ENCODE measurements at regions of chr20 and their contacts with region 1.

Region 1: DNA sequence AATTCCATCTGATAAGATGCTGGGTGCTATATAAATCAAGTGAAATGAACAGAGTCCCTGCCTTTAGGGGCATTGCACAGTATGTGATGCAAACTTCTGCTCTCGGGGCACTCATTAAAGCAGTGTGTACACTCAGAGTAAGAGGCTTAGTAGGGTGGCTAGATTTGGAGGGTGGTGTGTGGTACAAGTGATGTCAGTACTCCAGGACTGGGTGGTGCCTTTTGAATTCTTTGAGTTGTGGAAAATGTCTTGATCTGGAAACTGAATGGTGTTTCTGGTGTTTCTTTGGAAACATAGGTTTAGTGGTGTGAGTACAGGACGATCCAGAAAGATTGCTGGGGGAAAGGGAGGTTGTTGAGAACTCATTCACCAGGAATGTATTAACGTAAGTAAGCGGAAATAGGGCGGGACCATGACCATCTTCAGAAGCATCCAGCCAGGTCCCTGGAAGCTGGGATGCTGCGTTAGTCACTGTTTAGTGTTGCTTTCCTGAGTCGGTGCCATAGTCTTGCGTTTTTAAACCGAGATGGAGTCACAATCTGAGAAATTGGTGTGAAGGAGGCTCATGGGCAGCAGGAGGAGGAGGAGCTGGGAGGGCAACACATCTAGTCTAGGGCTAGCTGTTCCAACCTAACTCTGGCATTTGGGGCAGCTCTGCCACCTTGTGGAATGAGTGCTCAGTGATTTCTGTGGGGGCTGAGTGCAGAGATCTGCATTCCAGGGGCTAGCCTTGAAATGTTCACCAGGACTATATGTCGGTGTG is 70.3 kb downstream of the SCAND1 start:
- DNase-seq: peak; percentile 89
- H3K4me3 ChIP-seq: peak overlapping the region in 3 of 4 donors; percentile 18 to 33 (median 20)
- H3K27ac ChIP-seq: peak overlapping the region; percentile 70 to 88 (median 78)
- H3K4me1 ChIP-seq: peaks cover 0 to 27% (median 15%) of the 10 kb centered on the region in 4 donors
- H3K27me3 ChIP-seq: no peaks in the 10 kb centered on the region
- CTCF ChIP-seq: peak; percentile 66 to 75 (median 72)
- EP300 ChIP-seq: peak in 3 of 4 donors; percentile 50 to 88 (median 53)
- POLR2A ChIP-seq: no peak

Region 2: DNA sequence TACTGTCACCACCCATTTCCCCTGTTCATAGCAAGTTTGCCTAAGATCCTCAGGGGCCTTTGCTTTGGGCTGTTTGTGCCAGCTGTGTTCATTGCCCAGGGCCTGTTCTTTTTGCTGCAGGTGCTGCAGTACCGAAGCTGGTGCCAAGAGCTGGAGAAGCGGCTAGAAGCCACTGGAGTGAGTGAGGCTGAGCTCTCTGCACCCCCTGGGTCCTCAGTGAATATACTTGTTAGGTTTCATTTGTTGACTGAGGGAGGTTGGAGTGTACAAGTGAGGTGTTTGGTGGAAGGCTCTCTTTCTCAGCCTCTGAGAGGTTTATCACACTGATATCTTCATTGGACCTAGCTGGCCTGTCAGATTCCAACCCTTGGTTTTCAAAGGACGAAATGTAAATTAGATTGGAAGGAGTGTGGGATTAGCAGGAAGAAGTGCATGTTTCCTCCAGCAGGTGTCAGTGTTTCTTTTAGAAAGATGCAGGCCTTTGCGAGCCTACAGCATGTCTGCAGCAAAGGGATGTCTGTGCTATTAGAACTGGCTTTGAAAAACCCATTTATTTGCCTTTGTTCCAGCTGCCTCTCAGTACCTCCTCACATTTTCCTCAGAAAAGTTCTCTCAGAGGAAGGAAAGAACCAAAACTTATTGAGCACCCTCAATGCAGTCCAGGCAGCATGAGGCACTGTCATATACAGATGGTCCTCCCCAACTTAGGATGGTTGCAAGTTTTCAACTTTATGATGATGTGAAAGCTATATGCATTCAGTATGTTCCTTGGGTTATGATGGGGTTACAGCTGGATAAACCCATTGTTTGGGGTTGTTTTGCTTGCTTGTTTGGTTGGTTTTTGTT is 420.3 kb before region 1 on chr20:
- intact Hi-C with region 1: loop called (anchors 5 kb)
- DNase-seq: no peak
- H3K4me3 ChIP-seq: no peak overlapping the region
- H3K27ac ChIP-seq: no peak overlapping the region
- H3K4me1 ChIP-seq: peaks cover 0 to 5% (median 0%) of the 10 kb centered on the region in 4 donors
- H3K27me3 ChIP-seq: no peaks in the 10 kb centered on the region
- CTCF ChIP-seq: peak; percentile 38 to 77 (median 72)
- EP300 ChIP-seq: no peak
- POLR2A ChIP-seq: no peak

Region 3: DNA sequence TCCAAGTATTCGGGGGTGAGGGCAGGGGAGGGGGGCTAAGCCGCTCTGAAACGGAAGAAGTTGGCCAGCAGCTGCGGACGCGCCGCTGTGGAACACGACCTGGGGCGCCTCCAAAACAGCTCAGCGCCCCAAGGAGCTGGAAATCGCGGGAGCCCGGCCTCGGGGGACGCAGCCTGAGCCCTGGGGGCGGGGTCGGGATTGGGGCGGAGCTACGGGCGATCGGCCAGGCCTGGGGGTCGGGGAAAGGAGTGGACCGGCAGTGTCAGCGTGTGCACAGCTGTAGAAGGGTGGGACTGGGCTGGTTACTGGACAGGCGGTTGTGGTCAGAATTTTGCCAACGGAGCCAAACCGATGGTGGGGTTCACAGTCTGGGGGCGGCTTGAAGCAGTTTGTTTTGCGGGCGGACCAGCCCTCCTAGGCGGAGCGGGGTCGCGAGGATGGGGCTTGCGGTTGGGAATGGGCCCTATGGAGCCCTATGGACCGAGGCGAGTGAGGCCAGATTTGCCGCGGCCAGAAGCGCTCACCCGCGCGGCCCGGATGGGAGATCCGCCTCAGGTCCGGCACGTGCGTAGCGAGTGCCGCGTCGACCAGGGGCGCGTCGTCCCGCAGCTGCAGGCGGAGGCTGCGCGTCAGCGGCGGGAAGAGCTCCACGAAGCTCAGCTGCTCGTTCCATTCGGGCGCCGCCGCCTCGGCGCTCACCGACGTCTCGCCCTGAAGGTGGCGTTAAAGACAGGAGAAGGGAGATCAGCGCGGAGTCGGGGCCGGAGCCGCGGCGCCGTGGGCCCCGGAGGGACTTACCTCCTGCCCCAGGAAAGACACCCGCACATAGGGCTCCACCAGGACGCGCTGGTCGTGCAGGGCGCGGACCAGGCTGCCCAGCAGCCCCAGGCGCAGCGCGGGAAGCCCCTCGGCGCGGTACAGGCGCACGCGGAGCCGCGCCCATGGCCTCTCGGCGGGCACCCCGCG is 282.7 kb before region 1 on chr20:
- intact Hi-C with region 1: loop called (anchors 5 kb)
- DNase-seq: peak; percentile 91
- H3K4me3 ChIP-seq: peak overlapping the region; percentile 26 to 59 (median 50)
- H3K27ac ChIP-seq: peak overlapping the region in 2 of 4 donors; percentile 47 to 62
- H3K4me1 ChIP-seq: peaks cover 0 to 19% (median 19%) of the 10 kb centered on the region in 4 donors
- H3K27me3 ChIP-seq: peaks cover 0 to 29% (median 5%) of the 10 kb centered on the region in 3 donors
- CTCF ChIP-seq: peak; percentile 15 to 33 (median 26)
- EP300 ChIP-seq: no peak
- POLR2A ChIP-seq: no peak

Region 4: DNA sequence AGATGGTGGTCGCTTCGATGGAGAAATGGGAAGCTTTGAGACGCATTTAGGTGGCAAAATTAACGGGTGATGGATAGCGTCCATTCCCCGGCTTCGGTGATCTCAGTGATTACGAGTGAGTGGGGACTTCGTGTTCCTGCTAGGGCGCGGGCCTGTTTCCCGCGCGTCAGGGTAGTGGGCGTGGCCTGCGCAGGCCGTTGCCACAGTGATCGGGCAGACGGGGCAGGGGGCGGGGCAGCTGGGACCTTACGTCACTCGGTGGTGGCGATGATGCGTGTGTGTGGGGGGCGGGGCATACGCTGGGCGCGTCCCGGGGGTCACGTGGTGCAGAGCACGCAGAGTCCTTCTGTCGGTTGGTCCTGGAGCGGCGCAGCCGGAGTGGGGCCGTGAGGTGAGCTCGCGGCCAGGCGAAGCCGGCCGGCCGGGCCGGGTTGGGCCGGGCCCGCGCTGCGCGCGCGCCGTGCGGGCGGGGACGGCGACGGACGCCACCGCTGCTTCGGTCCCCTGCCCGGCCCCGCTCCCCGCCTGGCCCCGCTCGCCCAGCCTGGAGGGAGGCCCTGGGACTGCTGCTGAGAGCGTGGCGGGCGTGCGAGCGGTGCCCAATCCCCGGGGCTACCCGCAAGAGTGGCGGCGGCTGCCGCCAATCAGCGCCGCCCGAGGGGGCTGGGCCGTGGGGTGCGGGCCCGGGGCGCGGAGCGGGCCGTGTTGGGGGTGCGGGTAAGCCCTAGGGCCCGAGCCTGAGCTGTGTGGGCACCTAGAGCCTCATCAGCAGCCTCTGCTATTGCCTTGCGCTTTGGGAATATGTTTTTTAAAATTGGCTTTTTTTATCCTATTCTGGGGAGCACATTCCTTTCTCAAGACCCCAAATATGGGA is 112.0 kb before region 1 on chr20 and contains the start of gene PHF20:
- intact Hi-C with region 1: loop called (anchors 5 kb)
- DNase-seq: peak; percentile 100
- H3K4me3 ChIP-seq: peak within 1 kb of the TSS; percentile 62 to 84 (median 73)
- H3K27ac ChIP-seq: peak within 1 kb of the TSS; percentile 93 to 97 (median 94)
- H3K4me1 ChIP-seq: peaks cover 0 to 60% (median 38%) of the 10 kb centered on the region in 4 donors
- H3K27me3 ChIP-seq: no peaks in the 10 kb centered on the region
- CTCF ChIP-seq: no peak
- EP300 ChIP-seq: peak; percentile 95 to 99 (median 97)
- POLR2A ChIP-seq: peak in 1 of 2 donors; percentile 29
- total RNA-seq, gene PHF20: 41.0 to 49.7 (median 45.5) TPM